ENCODE measurements at regions of chr4 and their contacts with region 1.

Region 1: DNA sequence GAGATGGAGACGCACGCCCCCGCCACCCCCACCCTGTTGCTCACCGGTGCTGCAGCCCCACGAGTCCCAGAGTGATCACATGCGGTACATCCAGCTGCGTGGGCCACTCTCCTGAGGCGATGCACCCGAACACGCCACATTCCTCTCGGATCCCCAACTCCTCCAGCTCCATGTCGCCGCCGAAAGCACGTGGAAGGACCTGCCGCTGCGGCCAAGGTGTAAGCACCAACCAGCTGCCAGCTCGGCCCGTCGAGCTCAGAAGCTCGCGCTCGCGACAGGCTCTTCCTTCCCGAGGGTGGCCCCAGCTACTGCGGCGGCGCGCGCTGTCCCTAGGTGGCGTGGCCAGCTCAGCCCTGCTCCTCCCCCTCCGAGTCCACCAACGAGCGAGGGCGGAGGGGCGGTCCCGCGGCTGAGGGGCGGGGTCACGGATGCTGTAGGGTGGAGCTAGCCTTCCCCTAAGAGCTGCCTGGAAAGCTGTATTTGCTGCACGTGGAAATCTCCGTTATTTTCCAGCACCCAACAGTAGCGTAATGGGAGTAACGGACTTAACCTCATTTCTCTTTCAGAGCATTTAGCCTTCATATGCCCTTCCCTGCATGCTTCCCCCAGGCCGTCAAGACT is at the start of gene PPAT:
- DNase-seq: peak; percentile 97
- H3K4me3 ChIP-seq: peak within 1 kb of the TSS; percentile 65 to 66
- H3K27ac ChIP-seq: peak within 1 kb of the TSS; percentile 91 to 95
- H3K4me1 ChIP-seq: no peaks in the 10 kb centered on the region
- H3K27me3 ChIP-seq: no peaks in the 10 kb centered on the region
- CTCF ChIP-seq: peak in 3 of 4 experiments; percentile 21 to 71 (median 64)
- POLR2A ChIP-seq: peak; percentile 55
- total RNA-seq, gene PPAT: 7.0 to 12.2 TPM

Region 2: DNA sequence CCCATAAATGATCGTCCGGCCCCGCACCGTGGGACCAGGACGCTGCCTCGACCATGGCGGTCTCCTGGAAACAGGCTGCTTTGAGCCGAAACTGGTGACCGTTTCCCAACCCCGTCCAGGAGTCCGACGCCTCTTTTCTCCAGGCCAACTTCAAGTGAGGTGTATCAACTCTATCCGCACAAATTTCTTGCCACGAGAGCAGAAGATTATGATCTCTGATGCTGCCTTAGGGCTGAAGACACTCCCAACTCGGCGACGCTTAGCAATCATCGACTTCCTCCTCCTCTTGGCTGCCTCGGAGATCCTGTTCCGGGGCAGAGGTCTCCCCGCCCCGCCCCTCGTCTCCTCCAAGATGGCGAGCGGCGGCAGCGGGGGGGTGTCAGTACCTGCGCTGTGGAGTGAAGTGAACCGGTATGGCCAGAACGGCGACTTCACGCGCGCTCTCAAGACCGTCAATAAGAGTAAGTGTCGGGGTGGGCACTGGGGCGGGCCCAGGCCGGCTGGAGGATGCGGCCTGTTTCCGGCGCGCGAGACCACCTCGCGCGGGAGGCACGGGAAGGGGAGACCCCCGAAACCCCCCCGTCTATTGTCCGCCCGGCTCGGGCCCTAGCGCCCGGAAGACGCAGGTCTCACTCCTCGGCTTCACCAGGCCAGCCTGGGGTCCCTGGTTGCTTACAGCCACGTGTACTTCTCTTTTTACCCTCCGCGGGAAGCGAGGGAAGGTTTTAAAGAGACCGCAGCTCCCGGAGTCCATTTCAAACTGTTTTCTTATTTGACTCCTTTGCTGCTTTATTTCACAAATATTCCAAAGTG is 32.1 kb after region 1 on chr4 and contains the start of gene SRP72:
- intact Hi-C with region 1: loop called (anchors 5 kb)
- DNase-seq: peak; percentile 89
- H3K4me3 ChIP-seq: peak within 1 kb of the TSS; percentile 92 to 95
- H3K27ac ChIP-seq: peak within 1 kb of the TSS; percentile 91 to 96
- H3K4me1 ChIP-seq: peaks cover 3% of the 10 kb centered on the region
- H3K27me3 ChIP-seq: no peaks in the 10 kb centered on the region
- CTCF ChIP-seq: peak in 1 of 4 experiments; percentile 10
- POLR2A ChIP-seq: peak; percentile 74
- total RNA-seq, gene SRP72: 41.4 to 46.9 TPM

Region 3: GRCh38 chr4:56544573-56545131 is 109.2 kb after region 1 on chr4:
- intact Hi-C with region 1: loop called (anchors 10 kb)
- DNase-seq: peak; percentile 63
- H3K4me3 ChIP-seq: peak overlapping the region; percentile 11 to 27
- H3K27ac ChIP-seq: peak overlapping the region in 1 of 2 donors; percentile 10
- H3K4me1 ChIP-seq: no peaks in the 10 kb centered on the region
- H3K27me3 ChIP-seq: no peaks in the 10 kb centered on the region
- CTCF ChIP-seq: peak; percentile 92 to 97 (median 94)
- POLR2A ChIP-seq: no peak